ENCODE measurements at regions of chr7 and their contacts with region 1.

Region 1: GRCh38 chr7:94348142-94348541 is 46.6 kb upstream of the COL1A2 start:
- DNase-seq: peak in 1 of 2 donors; percentile 43
- ATAC-seq: peak in 7 of 8 donors; percentile 80 to 91 (median 86)
- H3K4me3 ChIP-seq: peak overlapping the region in 1 of 10 donors; percentile 7
- H3K27ac ChIP-seq: peak overlapping the region in 8 of 10 donors; percentile 3 to 81 (median 74)
- H3K4me1 ChIP-seq: peaks cover 0 to 12% (median 0%) of the 10 kb centered on the region in 9 donors
- H3K27me3 ChIP-seq: no peaks in the 10 kb centered on the region
- CTCF ChIP-seq: no peak

Region 2: DNA sequence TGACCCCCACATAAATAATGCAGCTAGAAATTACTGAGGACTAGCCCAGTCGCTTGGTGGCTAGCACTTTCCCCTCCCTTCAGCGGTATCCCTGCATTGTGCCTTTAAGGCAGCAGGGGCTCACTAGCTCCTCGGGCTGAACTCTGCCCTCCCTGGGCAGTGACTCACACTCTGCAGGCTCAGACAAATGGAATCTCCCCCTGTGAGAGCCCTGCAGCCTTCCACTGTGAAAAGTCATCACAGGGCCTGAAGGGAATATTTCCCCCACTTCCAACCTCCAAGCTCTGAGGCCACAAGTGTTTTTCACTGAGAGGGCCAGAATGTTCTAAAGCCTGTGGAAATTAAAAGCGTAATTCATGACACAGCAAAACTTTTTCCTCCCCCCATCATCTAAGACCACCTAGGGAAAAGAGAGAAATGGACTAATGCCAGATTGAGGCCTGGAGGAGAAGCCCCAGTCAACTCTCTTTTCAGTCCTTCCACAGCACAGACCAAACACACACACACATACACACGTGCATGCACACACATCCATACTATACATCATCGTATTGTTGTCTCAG is 47.0 kb before region 1 on chr7:
- intact Hi-C with region 1: loop called in 1 of 10 experiments (anchors 5 kb)
- DNase-seq: peak; percentile 65 to 66
- ATAC-seq: peak; percentile 83 to 93 (median 86)
- H3K4me3 ChIP-seq: no peak overlapping the region
- H3K27ac ChIP-seq: peak overlapping the region; percentile 23 to 86 (median 70)
- H3K4me1 ChIP-seq: peaks cover 5 to 64% (median 27%) of the 10 kb centered on the region in 9 donors
- H3K27me3 ChIP-seq: peaks cover 0 to 6% (median 0%) of the 10 kb centered on the region in 7 donors
- CTCF ChIP-seq: peak in 1 of 9 donors; percentile 3